Stomach (tissue), 19 donors: ENCODE measurements at regions of chr12 and their contacts with region 1.

Region 1: DNA sequence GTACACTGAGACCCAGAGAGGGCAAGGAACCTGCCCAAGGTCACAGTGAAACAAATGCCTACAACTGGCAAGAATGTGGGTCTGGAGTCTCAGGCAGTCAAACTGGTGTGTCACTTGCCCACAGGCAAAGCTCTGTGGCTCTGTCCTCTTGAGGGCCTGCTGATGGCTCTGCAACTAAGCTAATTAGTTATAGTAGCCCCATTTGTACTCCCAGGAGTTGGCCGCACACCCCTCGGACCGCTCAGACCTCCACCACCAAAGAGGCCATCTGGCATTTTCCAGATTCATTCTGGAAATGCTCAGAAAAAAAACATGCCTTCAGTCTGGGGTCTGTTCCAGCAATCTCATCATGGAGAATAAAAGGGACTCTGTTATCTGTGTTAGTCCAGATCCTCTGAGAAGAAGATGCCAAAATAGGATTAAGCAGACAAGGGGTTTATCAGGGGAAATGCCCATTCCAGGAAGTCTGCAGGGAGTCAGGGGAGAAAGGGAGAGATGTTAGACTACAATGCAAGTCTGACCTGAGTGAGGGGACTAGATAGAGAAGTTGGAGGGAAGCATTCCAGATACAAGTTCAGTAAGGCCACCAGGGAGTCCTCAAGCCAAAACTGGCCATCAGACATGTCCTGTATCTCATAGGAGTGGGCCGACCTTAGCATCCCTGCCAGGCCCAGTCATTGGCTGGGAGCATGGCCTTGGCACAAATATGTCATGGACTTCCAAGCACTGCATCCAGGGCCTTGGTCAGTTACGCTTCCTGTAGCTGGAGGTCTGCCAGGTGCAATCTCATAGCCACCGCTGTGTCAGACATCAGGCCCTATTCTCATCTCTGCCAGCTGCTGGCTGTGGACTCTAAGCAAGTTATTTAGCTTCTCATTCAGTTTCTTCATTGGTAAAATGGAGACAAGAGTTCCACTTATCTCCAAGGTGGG is 15.4 kb upstream of the OAS1 start:
- DNase-seq: peak in 1 of 2 donors; percentile 24
- H3K4me3 ChIP-seq: no peak overlapping the region
- H3K27ac ChIP-seq: no peak overlapping the region
- H3K4me1 ChIP-seq: no peaks in the 10 kb centered on the region
- H3K27me3 ChIP-seq: peaks cover 0 to 13% (median 0%) of the 10 kb centered on the region in 3 donors
- CTCF ChIP-seq: no peak
- EP300 ChIP-seq: no peak
- POLR2A ChIP-seq: no peak

Region 2: DNA sequence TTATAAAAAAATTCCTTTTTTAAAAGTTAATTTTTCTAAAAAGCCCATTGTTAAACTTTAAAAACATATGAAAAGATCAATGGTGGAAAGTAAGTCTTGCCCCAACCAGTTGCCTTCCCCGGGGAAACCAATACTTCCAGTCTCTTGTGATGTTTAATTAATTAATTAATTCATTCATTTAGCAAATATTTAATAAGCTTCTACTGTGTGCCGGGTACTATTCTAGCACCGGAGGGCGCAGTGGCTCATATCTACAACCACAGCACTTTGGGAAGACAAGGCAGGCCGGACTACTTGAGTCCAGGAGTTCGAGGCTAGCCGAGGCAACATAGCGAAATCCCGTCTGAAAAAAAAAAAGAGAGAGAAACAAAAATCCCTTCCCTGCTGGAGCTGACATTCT is 596.6 kb before region 1 on chr12:
- intact Hi-C with region 1: no loop called
- DNase-seq: peak in 1 of 2 donors; percentile 26
- H3K4me3 ChIP-seq: no peak overlapping the region
- H3K27ac ChIP-seq: no peak overlapping the region
- H3K4me1 ChIP-seq: no peaks in the 10 kb centered on the region
- H3K27me3 ChIP-seq: no peaks in the 10 kb centered on the region
- CTCF ChIP-seq: no peak
- EP300 ChIP-seq: no peak
- POLR2A ChIP-seq: no peak

Region 3: DNA sequence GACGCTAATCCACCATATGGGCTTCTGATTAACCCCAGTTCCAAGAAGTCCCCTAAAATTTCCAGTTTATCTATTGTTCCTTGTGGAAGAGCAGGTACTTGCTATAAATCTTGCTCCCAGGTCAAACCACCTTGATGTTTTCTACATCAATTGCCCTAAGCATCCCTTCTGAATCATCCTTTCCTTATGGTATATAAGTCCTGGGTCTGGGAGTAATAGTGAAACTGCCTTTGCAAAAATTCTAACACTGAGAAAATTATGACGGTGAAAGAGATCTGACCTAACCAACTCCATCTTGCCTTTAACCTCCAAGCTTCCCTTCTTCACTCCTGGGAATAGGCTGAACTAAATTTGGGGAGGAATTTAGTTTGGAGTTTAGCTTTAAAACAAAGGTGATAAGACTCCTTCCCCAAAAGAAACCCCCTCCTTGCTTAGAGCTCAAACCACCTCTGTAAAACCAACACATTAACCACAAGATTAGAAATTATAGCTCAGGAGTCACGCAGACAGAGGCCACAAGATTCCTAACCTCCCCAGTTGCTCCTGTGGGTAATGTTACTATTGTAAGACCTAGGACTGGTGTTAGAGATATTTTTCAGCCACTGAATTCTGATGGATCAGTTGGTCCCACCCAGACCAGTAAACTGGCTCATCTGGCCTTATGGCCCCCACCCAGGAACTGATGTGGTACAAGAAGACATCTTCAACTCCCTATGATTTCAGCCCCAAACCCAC is 131.4 kb after region 1 on chr12:
- intact Hi-C with region 1: loop called (anchors 10 kb)
- DNase-seq: no peak
- H3K4me3 ChIP-seq: no peak overlapping the region
- H3K27ac ChIP-seq: no peak overlapping the region
- H3K4me1 ChIP-seq: no peaks in the 10 kb centered on the region
- H3K27me3 ChIP-seq: no peaks in the 10 kb centered on the region
- CTCF ChIP-seq: no peak
- EP300 ChIP-seq: no peak
- POLR2A ChIP-seq: no peak